T-cell (primary cell): ENCODE measurements at regions of chr9 and their contacts with region 1.

Region 1: DNA sequence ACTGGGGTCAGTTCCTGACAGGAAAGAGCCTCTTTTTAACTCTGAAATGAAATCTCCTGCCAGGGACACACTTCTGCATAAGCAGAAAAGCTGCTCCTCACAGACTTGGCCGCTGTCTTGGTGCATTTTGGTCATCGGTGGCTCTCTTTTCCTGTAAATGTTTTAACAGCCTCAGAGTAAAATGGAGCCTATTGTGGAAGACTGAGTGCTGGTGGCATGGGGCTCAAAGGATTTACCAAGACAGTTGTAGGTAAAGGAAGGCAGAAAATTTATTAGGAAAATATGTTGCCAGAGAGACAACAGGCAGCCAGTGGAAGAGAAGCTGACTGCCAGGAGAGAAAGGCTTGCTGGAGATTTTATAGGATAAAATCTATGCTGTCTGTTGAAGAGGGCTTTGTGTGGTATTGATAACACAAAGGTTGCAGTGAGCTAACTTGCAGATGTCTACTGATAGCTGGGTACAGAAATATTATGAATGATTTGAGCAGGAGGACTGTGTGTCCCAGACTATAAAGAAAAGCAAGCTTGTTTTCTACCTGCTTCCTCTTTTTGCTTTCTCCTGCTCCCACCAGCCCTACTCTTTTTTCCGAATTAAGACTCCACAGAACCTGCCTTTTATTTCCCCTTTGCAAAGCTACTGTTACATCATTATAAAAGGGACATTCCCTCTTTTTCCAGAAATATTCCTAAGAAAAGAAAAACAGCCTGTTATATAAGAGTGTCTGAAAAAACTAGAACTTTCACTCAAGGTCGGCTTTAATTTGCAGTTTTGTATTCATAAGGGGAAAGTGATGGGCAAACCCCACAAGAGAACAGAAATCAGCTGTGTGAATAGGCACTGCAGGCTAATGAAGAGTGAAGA is 27.9 kb upstream of the IFNA14 start:
- DNase-seq: no peak
- ATAC-seq: no peak
- H3K4me3 ChIP-seq: no peak overlapping the region
- H3K4me3 Mint-ChIP-seq: no peak overlapping the region
- H3K27ac ChIP-seq: no peak overlapping the region
- H3K27ac Mint-ChIP-seq: no peak overlapping the region
- H3K4me1 ChIP-seq: no peaks in the 10 kb centered on the region
- H3K4me1 Mint-ChIP-seq: peaks cover 0 to 6% (median 2%) of the 10 kb centered on the region in 3 donors
- H3K27me3 ChIP-seq: peaks cover 0 to 5% of the 10 kb centered on the region in 2 experiments
- H3K27me3 Mint-ChIP-seq: peaks cover 13 to 22% of the 10 kb centered on the region in 2 donors

Region 2: GRCh38 chr9:21154018-21154608 is 113.6 kb before region 1 on chr9:
- CTCF ChIA-PET with region 1: no interaction called
- POLR2A ChIA-PET with region 1: interaction called in 1 of 2 experiments, 10 read pairs
- DNase-seq: peak in 1 of 35 experiments; percentile 45
- ATAC-seq: peak; percentile 40 to 78 (median 63)
- H3K4me3 ChIP-seq: no peak overlapping the region
- H3K4me3 Mint-ChIP-seq: no peak overlapping the region
- H3K27ac ChIP-seq: no peak overlapping the region
- H3K27ac Mint-ChIP-seq: no peak overlapping the region
- H3K4me1 ChIP-seq: no peaks in the 10 kb centered on the region
- H3K4me1 Mint-ChIP-seq: peaks cover 10 to 11% (median 10%) of the 10 kb centered on the region in 3 donors
- H3K27me3 ChIP-seq: peaks cover 0 to 7% of the 10 kb centered on the region in 2 experiments
- H3K27me3 Mint-ChIP-seq: peaks cover 0 to 6% of the 10 kb centered on the region in 2 donors